ENCODE measurements at regions of chr1 and their contacts with region 1.

Region 1: GRCh38 chr1:77313491-77313890 is 31.7 kb downstream of the AK5 start:
- DNase-seq: peak; percentile 40
- ATAC-seq: peak; percentile 100
- H3K4me3 ChIP-seq: no peak overlapping the region
- H3K27ac ChIP-seq: no peak overlapping the region
- H3K4me1 ChIP-seq: no peaks in the 10 kb centered on the region
- H3K27me3 ChIP-seq: no peaks in the 10 kb centered on the region; a peak in 2 of 5 replicates
- CTCF ChIP-seq: peak; percentile 54
- EP300 ChIP-seq: no peak
- POLR2A ChIP-seq: no peak
- RAD21 ChIP-seq: no peak

Region 2: DNA sequence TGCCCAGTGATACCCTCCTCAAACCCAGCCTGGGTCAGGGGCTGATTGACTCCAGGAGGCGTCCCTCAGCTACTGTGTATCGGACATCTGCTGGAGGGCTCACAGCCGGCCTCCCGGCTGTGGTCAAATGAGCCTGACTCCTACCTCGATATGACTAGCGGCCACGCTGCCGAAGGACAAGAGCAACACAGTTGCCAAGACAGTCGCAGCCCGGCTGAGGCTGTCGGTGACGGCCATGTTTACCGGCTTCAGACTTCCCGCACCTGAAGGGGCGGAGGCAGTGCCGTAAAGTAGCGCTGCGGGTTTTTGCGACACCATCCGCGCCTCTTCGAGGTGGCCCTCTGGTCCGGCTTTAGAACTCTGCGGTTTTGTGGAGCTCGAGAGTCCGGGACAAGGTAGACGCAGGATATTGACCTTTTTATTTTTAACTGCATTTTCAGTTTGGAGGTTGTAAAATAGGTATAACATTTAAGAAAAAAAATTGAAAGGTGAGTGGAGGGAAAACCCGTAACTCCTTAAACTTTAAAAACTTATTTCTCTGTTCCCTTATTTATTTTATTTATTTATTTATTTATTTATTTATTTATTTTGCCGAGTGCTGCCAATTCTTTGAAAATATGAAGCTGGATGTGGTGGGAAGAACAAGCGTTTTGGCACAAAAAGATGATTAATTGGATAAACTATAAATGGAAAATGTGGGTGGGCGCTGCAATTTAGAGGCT is 94.2 kb before region 1 on chr1 and contains the start of gene PIGK:
- CTCF ChIA-PET with region 1: no interaction called
- POLR2A ChIA-PET with region 1: no interaction called
- in situ Hi-C with region 1: no loop called
- intact Hi-C with region 1: loop called (anchors 10 kb)
- DNase-seq: peak; percentile 81
- ATAC-seq: peak; percentile 95
- H3K4me3 ChIP-seq: peak within 1 kb of the TSS; percentile 81 to 99 (median 98)
- H3K27ac ChIP-seq: peak within 1 kb of the TSS; percentile 70
- H3K4me1 ChIP-seq: 0 out of 2 replicates have a peak, but pooled peaks cover 4% of the 10 kb centered on the region
- H3K27me3 ChIP-seq: no peaks in the 10 kb centered on the region; a peak in 1 of 5 replicates
- CTCF ChIP-seq: peak; percentile 27; the same call in 1 of the 2 replicates
- EP300 ChIP-seq: no peak
- POLR2A ChIP-seq: peak; percentile 67 to 73; a peak in 3 of 4 replicates
- RAD21 ChIP-seq: no peak
- total RNA-seq, gene PIGK: 23.7 and 38.5 TPM in 2 replicates

Measured in HepG2 (cell line).